Naive thymus-derived CD4-positive, alpha-beta T cell (primary cell): ENCODE measurements at regions of chr6 and their contacts with region 1.

Region 1: DNA sequence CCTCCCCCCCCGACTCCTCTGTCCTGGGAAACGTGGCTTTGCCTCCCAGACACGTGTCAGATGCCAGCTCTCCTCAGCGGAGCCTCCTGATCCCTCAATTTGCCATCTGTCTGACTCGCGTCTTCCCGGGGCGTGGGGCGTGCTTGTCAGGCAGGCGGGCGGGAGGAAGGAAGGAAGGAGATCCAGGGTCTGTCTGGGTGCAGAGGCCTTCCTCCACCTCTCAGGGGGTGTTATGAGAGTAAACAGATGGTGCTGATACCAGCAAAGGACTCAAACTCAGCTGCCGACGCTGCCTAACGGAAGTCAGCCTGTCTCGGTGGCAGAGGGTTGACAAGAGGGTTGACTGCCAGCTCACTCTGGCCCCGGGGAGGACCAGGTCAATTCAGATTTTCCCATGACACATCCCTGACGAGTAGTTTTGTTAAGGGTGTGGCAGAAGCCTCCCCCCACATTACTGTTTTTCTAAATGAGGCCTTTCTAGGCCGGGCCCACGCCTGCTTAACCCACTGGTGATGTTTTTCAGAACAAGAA is 17.0 kb downstream of the UQCC2 start:
- DNase-seq: peak; percentile 28 to 70 (median 64)
- ATAC-seq: peak; percentile 68
- H3K4me3 ChIP-seq: no peak overlapping the region
- H3K4me3 Mint-ChIP-seq: peak overlapping the region; percentile 66 to 86 (median 78)
- H3K27ac ChIP-seq: peak overlapping the region; percentile 80
- H3K27ac Mint-ChIP-seq: peak overlapping the region; percentile 88 to 100 (median 96)
- H3K4me1 ChIP-seq: peaks cover 58 to 74% of the 10 kb centered on the region in 2 donors
- H3K4me1 Mint-ChIP-seq: peaks cover 33 to 85% (median 74%) of the 10 kb centered on the region in 7 donors
- H3K27me3 ChIP-seq: no peaks in the 10 kb centered on the region
- H3K27me3 Mint-ChIP-seq: no peaks in the 10 kb centered on the region

Region 2: GRCh38 chr6:33633462-33634158 is 60.9 kb before region 1 on chr6:
- CTCF ChIA-PET with region 1: interaction called, 3 read pairs
- POLR2A ChIA-PET with region 1: interaction called, 3 read pairs
- intact Hi-C with region 1: loop called in 1 of 2 experiments (anchors 2 kb)
- DNase-seq: peak; percentile 30 to 77 (median 46)
- ATAC-seq: peak; percentile 88
- H3K4me3 ChIP-seq: peak overlapping the region; percentile 43
- H3K4me3 Mint-ChIP-seq: peak overlapping the region; percentile 87 to 94 (median 89)
- H3K27ac ChIP-seq: peak overlapping the region; percentile 56
- H3K27ac Mint-ChIP-seq: peak overlapping the region; percentile 46 to 89 (median 73)
- H3K4me1 ChIP-seq: peaks cover 20 to 32% of the 10 kb centered on the region in 2 donors
- H3K4me1 Mint-ChIP-seq: peaks cover 47 to 79% (median 70%) of the 10 kb centered on the region in 7 donors
- H3K27me3 ChIP-seq: no peaks in the 10 kb centered on the region
- H3K27me3 Mint-ChIP-seq: peaks cover 0 to 3% (median 0%) of the 10 kb centered on the region in 5 donors

Region 3: GRCh38 chr6:33717934-33718455 is 23.5 kb after region 1 on chr6:
- CTCF ChIA-PET with region 1: no interaction called
- POLR2A ChIA-PET with region 1: no interaction called
- intact Hi-C with region 1: no loop called
- DNase-seq: no peak
- ATAC-seq: no peak
- H3K4me3 ChIP-seq: no peak overlapping the region
- H3K4me3 Mint-ChIP-seq: no peak overlapping the region
- H3K27ac ChIP-seq: no peak overlapping the region
- H3K27ac Mint-ChIP-seq: no peak overlapping the region
- H3K4me1 ChIP-seq: peaks cover 0 to under 1% of the 10 kb centered on the region in 2 donors
- H3K4me1 Mint-ChIP-seq: peaks cover 0 to 6% (median 2%) of the 10 kb centered on the region in 7 donors
- H3K27me3 ChIP-seq: no peaks in the 10 kb centered on the region
- H3K27me3 Mint-ChIP-seq: peaks cover 0 to 37% (median 5%) of the 10 kb centered on the region in 5 donors